ENCODE measurements at regions of chr2 and their contacts with region 1.

Region 1: DNA sequence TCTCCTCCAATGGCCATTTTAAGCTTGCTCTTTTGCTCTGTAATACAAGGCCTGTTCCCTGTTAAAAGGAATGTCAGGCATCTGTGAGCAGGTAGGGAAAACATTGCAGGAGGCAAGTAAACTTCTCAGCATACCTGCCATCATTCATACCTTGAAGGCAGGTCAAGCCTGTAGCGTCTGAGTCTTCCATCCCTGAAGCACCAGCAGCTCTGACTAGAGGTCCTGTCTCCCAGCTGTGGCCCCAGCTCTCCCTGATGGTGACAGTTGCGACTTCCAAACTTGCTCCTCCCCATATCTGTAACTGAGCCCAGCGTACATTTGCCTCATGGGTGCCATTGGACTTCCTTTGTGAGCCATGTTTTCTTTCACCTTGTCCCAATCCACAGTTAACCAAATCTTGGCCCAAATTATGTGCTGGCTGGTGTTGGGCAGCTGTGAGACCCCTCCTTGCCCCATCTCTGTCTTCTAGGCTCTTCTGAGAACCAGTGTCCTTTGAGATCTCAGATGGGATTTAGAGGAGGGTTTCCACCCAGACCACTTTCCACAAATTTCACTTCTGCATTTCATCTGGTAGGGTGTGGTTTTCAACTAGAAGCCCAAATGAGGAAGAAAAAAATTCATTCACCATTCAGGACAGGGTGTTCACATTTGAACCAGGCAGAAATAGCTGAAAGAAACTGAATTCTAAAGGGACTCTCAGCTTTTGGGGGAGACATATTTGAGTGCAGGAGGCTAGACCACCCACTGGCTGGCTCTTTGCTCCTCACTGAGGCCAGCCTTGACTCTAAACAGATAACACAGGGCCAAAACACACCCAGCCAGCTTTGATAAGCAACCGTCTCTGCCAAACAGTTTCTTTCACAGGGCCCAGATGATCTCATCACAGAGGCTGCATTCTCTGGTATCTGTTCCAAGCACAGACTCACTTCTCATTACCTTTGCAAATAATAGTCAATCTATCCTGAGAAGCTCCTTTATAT is 66.4 kb upstream of the MSH2 start:
- DNase-seq: no peak
- H3K4me3 Mint-ChIP-seq: no peak overlapping the region
- H3K27ac Mint-ChIP-seq: no peak overlapping the region
- H3K4me1 Mint-ChIP-seq: no peaks in the 10 kb centered on the region
- H3K27me3 Mint-ChIP-seq: peaks cover 3% of the 10 kb centered on the region

Region 2: DNA sequence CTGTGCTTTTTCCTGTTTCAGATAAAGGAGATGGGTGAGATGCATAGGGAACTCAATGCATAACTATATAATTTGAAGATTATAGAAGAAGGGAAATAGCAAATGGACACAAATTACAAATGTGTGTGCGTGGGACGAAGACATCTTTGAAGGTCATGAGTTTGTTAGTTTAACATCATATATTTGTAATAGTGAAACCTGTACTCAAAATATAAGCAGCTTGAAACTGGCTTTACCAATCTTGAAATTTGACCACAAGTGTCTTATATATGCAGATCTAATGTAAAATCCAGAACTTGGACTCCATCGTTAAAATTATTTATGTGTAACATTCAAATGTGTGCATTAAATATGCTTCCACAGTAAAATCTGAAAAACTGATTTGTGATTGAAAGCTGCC is 50.0 kb after region 1 on chr2:
- CTCF ChIA-PET with region 1: interaction called, 86 read pairs
- POLR2A ChIA-PET with region 1: no interaction called
- intact Hi-C with region 1: loop called (anchors 1 kb)
- DNase-seq: no peak
- H3K4me3 Mint-ChIP-seq: no peak overlapping the region
- H3K27ac Mint-ChIP-seq: no peak overlapping the region
- H3K4me1 Mint-ChIP-seq: no peaks in the 10 kb centered on the region
- H3K27me3 Mint-ChIP-seq: peaks cover 10% of the 10 kb centered on the region

Region 3: DNA sequence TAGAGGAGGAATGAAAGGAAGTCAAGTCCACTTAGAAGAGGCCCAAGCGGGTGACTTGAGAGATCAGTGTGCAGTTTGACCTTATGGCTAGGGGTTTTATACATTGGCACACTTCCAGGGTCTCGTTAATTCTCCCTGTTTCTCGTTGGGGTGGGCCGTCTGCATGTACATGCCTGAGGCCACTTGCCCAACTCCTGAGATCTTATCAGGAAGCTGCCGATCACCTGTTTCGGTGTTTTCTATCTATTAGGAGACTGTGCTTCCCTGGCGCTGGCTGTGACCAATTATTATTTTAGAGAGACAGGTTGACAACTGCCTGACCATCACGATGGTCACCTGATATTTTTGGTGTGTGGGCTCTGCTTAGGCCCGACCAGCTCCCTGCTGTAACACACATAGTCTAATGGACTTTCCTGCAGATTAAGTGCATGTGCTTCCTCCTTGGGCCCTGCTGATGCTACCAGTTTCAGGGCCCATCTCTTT is 415.4 kb after region 1 on chr2:
- CTCF ChIA-PET with region 1: no interaction called
- POLR2A ChIA-PET with region 1: no interaction called
- intact Hi-C with region 1: no loop called
- DNase-seq: no peak
- H3K4me3 Mint-ChIP-seq: no peak overlapping the region
- H3K27ac Mint-ChIP-seq: peak overlapping the region; percentile 87
- H3K4me1 Mint-ChIP-seq: peaks cover 17% of the 10 kb centered on the region
- H3K27me3 Mint-ChIP-seq: no peaks in the 10 kb centered on the region